Panc1 (cell line): ENCODE measurements at regions of chr17 and their contacts with region 1.

Region 1: GRCh38 chr17:75627094-75627493 is 6.1 kb upstream of the SMIM5 start:
- DNase-seq: no peak
- ATAC-seq: no peak
- H3K4me3 ChIP-seq: no peak overlapping the region
- H3K27ac ChIP-seq: no peak overlapping the region
- H3K4me1 ChIP-seq: no peaks in the 10 kb centered on the region
- H3K27me3 ChIP-seq: no peaks in the 10 kb centered on the region
- CTCF ChIP-seq: no peak

Region 2: GRCh38 chr17:75738218-75738802 is 111.2 kb after region 1 on chr17:
- CTCF ChIA-PET with region 1: interaction called, 15 read pairs
- POLR2A ChIA-PET with region 1: no interaction called
- in situ Hi-C with region 1: no loop called
- intact Hi-C with region 1: no loop called
- DNase-seq: no peak
- ATAC-seq: no peak
- H3K4me3 ChIP-seq: no peak overlapping the region
- H3K27ac ChIP-seq: no peak overlapping the region
- H3K4me1 ChIP-seq: no peaks in the 10 kb centered on the region
- H3K27me3 ChIP-seq: no peaks in the 10 kb centered on the region
- CTCF ChIP-seq: no peak